ENCODE measurements at regions of chr10 and their contacts with region 1.

Region 1: GRCh38 chr10:97736902-97737769 is at the start of gene ZFYVE27:
- DNase-seq: peak; percentile 97 to 98
- H3K4me3 ChIP-seq: peak within 1 kb of the TSS; percentile 77
- H3K4me3 Mint-ChIP-seq: peak within 1 kb of the TSS; percentile 83
- H3K27ac Mint-ChIP-seq: peak within 1 kb of the TSS; percentile 84
- H3K4me1 ChIP-seq: peaks cover 4% of the 10 kb centered on the region; the same call in 1 of the 2 replicates
- H3K4me1 Mint-ChIP-seq: peaks cover 21% of the 10 kb centered on the region
- H3K27me3 ChIP-seq: no peaks in the 10 kb centered on the region
- H3K27me3 Mint-ChIP-seq: no peaks in the 10 kb centered on the region
- CTCF ChIP-seq: no peak
- total RNA-seq, gene ZFYVE27: 41.3 and 41.6 TPM in 2 replicates

Region 2: DNA sequence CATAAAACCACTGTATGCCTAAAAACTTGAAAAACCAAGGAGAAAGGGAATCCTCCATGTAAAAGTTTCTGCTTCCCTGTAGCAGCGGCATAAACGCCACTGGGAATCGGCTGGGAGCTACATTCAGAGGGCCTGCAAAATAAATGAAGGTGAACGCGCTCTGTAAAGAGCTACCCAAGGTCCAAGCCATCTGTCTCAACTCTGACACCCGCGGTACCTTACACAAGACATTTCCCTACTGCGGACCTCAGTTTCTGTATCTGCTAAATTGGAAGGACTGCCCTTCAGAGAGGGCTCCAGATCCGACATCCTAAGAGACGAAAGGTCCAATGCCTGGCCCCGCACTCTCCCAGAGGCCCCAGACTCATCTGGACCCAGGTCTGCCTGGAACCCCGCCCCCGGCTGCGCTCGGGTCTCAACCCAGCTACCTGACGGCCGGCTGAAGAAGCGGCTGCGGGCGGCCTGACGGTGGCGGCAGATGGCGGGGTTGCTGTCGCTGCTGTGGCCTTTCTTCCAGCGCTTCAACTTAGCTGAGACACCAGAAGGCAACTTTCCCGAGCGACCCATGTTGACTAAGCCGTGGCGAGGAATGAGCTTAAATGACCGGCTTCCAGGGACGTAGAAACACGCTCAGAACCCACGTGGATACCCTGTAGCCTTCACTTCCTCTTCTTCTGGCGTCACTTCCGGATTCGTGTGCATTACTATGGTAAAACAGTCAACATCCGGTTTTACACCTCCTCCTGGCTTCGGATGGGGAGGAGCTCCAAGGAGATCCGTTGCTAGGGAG is 336.3 kb before region 1 on chr10 and contains the start of gene RRP12:
- CTCF ChIA-PET with region 1: no interaction called
- POLR2A ChIA-PET with region 1: interaction called, 6 read pairs
- intact Hi-C with region 1: loop called (anchors 10 kb)
- DNase-seq: peak; percentile 93 to 94
- H3K4me3 ChIP-seq: peak within 1 kb of the TSS; percentile 89
- H3K4me3 Mint-ChIP-seq: peak within 1 kb of the TSS; percentile 92
- H3K27ac Mint-ChIP-seq: peak within 1 kb of the TSS; percentile 95
- H3K4me1 ChIP-seq: no peaks in the 10 kb centered on the region
- H3K4me1 Mint-ChIP-seq: no peaks in the 10 kb centered on the region
- H3K27me3 ChIP-seq: no peaks in the 10 kb centered on the region
- H3K27me3 Mint-ChIP-seq: no peaks in the 10 kb centered on the region
- CTCF ChIP-seq: peak in 1 of 2 experiments; percentile 39
- total RNA-seq, gene RRP12: 69.3 and 70.5 TPM in 2 replicates

Region 3: GRCh38 chr10:97714048-97714371 is 23.1 kb before region 1 on chr10:
- CTCF ChIA-PET with region 1: interaction called, 12 read pairs
- POLR2A ChIA-PET with region 1: interaction called, 16 read pairs
- intact Hi-C with region 1: no loop called
- DNase-seq: peak; percentile 74 to 81
- H3K4me3 ChIP-seq: peak overlapping the region; percentile 89
- H3K4me3 Mint-ChIP-seq: peak overlapping the region; percentile 92
- H3K27ac Mint-ChIP-seq: peak overlapping the region; percentile 91
- H3K4me1 ChIP-seq: peaks cover 21% of the 10 kb centered on the region
- H3K4me1 Mint-ChIP-seq: peaks cover 19% of the 10 kb centered on the region
- H3K27me3 ChIP-seq: no peaks in the 10 kb centered on the region
- H3K27me3 Mint-ChIP-seq: no peaks in the 10 kb centered on the region
- CTCF ChIP-seq: peak in 1 of 2 experiments; percentile 49

Measured in Caco-2 (cell line).